Activated CD8-positive, alpha-beta memory T cell treated with anti-CD3 and anti-CD28 coated beads, Interleukin-2, amount 10 ng/mL, durations not matched to agents 7 days and 5 days (primary cell): ENCODE measurements at regions of chr3 and their contacts with region 1.

Region 1: GRCh38 chr3:46276502-46277099 is 34.3 kb downstream of the CCR3 start:
- DNase-seq: peak; percentile 92
- ATAC-seq: peak; percentile 82
- H3K4me3 Mint-ChIP-seq: no peak overlapping the region
- H3K27ac Mint-ChIP-seq: peak overlapping the region; percentile 87
- H3K4me1 Mint-ChIP-seq: peaks cover 61% of the 10 kb centered on the region
- H3K27me3 Mint-ChIP-seq: peaks cover 11% of the 10 kb centered on the region

Region 2: DNA sequence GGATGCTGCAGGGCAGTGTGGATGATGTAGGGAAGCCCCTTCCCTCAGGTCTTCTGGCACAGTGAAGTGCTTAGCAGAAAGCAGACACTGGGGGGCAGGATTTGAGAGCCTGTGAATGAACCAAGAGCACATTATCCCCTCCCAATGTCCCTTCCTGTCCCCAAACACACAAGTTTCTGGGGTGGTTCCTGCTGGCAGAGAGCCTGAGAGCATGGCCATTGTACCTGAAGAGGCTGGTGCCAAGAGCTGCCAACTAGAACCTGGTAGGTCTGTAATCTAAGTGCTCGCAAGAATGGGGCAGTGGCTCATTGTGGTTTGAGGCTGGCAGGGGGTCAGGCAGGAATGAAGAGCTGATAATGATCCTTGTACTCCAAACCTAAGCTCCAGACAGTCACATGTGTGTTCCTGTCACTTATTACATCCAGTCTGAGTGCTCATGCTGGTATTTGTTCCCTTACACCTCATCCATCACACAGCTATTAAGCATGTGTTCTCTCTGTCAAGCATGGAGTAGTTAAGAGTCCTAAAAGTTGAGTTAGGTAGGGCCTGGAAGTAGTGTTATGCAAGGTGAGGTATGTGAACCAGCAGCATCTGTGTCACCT is 61.7 kb before region 1 on chr3:
- CTCF ChIA-PET with region 1: interaction called, 23 read pairs
- DNase-seq: peak; percentile 72
- ATAC-seq: peak; percentile 60
- H3K4me3 Mint-ChIP-seq: no peak overlapping the region
- H3K27ac Mint-ChIP-seq: no peak overlapping the region
- H3K4me1 Mint-ChIP-seq: peaks cover 32% of the 10 kb centered on the region
- H3K27me3 Mint-ChIP-seq: peaks cover 3% of the 10 kb centered on the region

Region 3: DNA sequence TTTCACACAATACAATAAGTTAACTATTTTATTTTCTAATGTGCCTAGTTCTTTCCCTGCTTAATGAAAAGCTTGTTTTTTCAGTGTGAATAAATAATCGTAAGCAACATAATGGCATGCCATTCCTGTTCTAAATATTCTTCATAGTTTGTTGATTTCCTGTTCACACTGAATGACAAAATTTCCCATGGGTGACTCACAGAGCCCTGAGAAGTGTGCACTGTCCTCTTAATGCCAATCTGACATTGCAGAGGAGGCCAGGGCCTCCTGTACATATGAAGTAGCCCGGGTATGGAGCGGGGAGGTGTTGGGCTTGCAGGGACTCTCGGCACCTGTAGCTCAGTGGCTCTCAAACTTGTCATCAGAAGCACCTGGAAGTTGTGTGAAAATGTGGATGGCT is 10.0 kb before region 1 on chr3:
- CTCF ChIA-PET with region 1: interaction called, 23 read pairs
- DNase-seq: no peak
- ATAC-seq: no peak
- H3K4me3 Mint-ChIP-seq: no peak overlapping the region
- H3K27ac Mint-ChIP-seq: no peak overlapping the region
- H3K4me1 Mint-ChIP-seq: peaks cover 73% of the 10 kb centered on the region
- H3K27me3 Mint-ChIP-seq: peaks cover 4% of the 10 kb centered on the region

Region 4: DNA sequence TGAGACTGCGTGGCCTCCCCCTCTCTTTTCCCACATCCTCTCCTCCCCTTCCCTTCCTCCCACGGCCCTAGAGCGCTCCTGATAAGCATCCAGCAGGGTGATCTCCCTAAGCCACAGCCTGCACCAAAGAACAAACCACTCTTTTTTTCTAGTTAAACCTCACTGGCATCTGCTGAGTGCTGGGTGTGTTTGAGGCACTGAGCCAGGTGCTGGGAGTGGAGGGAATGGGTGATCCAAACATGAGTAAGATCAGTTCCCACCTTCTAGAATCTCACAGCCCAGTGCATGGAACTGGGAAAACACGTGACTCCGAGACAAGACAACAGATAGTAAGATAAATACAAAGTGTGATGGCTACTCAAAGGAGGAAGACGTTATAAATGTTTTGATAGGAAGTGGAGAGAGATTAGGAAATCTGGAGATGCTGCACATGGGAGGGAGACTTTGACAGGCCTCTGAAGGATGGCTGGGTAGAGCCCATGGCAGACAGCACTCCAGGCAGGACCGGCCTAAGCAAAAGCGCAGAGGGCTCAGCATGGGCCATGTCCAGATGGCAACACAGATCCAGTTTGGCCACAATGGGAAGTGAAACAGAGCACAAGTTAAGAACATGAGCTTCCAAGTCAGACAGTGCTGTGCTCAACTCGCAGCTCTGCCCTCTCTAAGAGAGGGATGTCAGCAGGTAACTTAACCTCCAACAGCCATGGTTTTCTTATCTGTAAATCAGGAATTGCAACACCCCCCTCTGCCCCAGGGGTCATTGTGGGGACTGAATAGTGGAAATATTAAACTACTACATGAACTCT is 21.3 kb after region 1 on chr3:
- CTCF ChIA-PET with region 1: interaction called, 17 read pairs
- DNase-seq: no peak
- ATAC-seq: no peak
- H3K4me3 Mint-ChIP-seq: no peak overlapping the region
- H3K27ac Mint-ChIP-seq: peak overlapping the region; percentile 96
- H3K4me1 Mint-ChIP-seq: peaks cover 92% of the 10 kb centered on the region
- H3K27me3 Mint-ChIP-seq: peaks cover 4% of the 10 kb centered on the region

Region 5: DNA sequence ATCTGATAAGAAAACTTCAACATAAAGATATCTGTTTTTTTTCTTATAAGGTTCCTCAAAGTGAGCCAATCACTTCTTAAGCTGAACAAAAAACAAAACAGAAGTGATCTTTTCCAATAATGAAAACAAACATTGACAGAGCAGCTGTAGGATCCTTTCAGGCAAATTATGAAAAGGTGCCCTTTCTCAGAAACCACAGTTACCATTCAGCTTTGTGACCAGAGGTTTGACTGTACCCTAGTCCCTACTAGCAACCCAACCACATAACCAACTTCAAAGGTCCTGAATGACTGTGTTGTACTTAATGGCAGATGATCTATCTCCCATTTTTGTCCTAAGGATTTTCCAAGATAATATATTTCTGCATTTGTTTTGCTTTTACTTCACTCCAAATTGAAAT is 37.9 kb after region 1 on chr3:
- CTCF ChIA-PET with region 1: interaction called, 14 read pairs
- DNase-seq: peak; percentile 62
- ATAC-seq: peak; percentile 53
- H3K4me3 Mint-ChIP-seq: no peak overlapping the region
- H3K27ac Mint-ChIP-seq: peak overlapping the region; percentile 15
- H3K4me1 Mint-ChIP-seq: peaks cover 18% of the 10 kb centered on the region
- H3K27me3 Mint-ChIP-seq: peaks cover 21% of the 10 kb centered on the region

Region 6: GRCh38 chr3:46378426-46378942 is 101.9 kb after region 1 on chr3:
- CTCF ChIA-PET with region 1: interaction called, 186 read pairs
- DNase-seq: peak; percentile 81
- ATAC-seq: peak; percentile 34
- H3K4me3 Mint-ChIP-seq: no peak overlapping the region
- H3K27ac Mint-ChIP-seq: peak overlapping the region; percentile 53
- H3K4me1 Mint-ChIP-seq: peaks cover 72% of the 10 kb centered on the region
- H3K27me3 Mint-ChIP-seq: peaks cover 6% of the 10 kb centered on the region